ENCODE measurements at regions of chr1 and their contacts with region 1.

Region 1: DNA sequence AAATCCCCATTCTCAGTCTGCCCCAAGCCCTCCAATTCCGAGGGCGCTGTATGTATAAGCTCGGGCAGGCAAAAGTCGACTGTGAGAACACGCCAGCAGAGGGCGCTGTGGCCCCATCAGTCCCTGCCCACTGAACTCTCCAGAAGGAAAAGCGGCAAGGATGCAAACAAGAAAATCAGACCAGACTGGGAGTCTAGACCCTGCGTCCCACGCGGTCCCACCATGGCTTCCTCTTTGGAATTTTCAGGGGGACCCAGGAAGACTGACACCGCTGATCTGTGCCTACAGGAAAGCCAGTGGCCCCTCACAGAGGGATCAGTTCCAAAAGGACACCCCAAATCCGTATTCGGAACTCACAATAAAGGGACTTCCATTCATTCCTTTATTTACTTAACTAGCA is 19.5 kb downstream of the TEX35 start:
- DNase-seq: peak; percentile 68
- ATAC-seq: peak; percentile 64
- H3K4me3 ChIP-seq: 0 out of 4 replicates have a peak overlapping the region, but pooled peaks of 1 of the 2 experiments have one; percentile 13
- H3K27ac ChIP-seq: no peak overlapping the region
- H3K4me1 ChIP-seq: peaks cover 27 to 55% of the 10 kb centered on the region in 2 experiments
- H3K27me3 ChIP-seq: no peaks in the 10 kb centered on the region
- CTCF ChIP-seq: peak; percentile 91 to 96 (median 92)
- POLR2A ChIP-seq: no peak
- RAD21 ChIP-seq: peak; percentile 96

Region 2: GRCh38 chr1:178300352-178300699 is 232.1 kb before region 1 on chr1:
- CTCF ChIA-PET with region 1: interaction called, 15 read pairs
- POLR2A ChIA-PET with region 1: no interaction called
- RAD21 ChIA-PET with region 1: interaction called in 1 of 2 experiments, 4 read pairs
- intact Hi-C with region 1: no loop called
- DNase-seq: no peak
- ATAC-seq: peak; percentile 34; the same call in 1 of the 2 replicates
- H3K4me3 ChIP-seq: no peak overlapping the region
- H3K27ac ChIP-seq: no peak overlapping the region
- H3K4me1 ChIP-seq: peaks cover 4 to 8% of the 10 kb centered on the region in 2 experiments; a peak in 2 of 4 replicates
- H3K27me3 ChIP-seq: no peaks in the 10 kb centered on the region
- CTCF ChIP-seq: no peak
- POLR2A ChIP-seq: no peak
- RAD21 ChIP-seq: no peak

Region 3: GRCh38 chr1:178501705-178502329 is 30.6 kb before region 1 on chr1:
- CTCF ChIA-PET with region 1: interaction called, 10 read pairs
- POLR2A ChIA-PET with region 1: no interaction called
- RAD21 ChIA-PET with region 1: no interaction called
- intact Hi-C with region 1: no loop called
- DNase-seq: peak; percentile 48
- ATAC-seq: peak; percentile 91
- H3K4me3 ChIP-seq: no peak overlapping the region
- H3K27ac ChIP-seq: no peak overlapping the region
- H3K4me1 ChIP-seq: peaks cover 0 to 7% of the 10 kb centered on the region in 2 experiments; a peak in 1 of 4 replicates
- H3K27me3 ChIP-seq: no peaks in the 10 kb centered on the region
- CTCF ChIP-seq: peak; percentile 80 to 95 (median 85)
- POLR2A ChIP-seq: no peak
- RAD21 ChIP-seq: peak; percentile 80

Region 4: DNA sequence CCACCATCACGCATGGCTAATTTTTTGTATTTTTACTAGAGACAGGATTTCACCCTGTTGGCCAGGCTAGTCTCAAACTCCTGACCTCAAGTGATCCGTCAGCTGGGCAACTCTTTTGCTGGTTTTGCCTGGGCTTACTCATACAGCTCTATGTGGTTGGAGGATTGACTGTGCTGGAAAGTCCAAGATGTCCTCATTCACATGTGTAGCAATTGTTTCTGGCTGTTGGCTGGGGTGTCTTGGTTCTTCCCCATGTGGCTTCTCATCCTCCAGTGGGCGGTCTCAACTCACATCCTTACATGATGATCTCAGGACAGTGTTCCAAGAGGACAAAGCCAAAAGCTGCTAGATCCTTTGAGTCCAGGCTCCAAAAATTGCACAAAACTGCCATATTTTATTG is 33.8 kb after region 1 on chr1:
- CTCF ChIA-PET with region 1: no interaction called
- POLR2A ChIA-PET with region 1: no interaction called
- RAD21 ChIA-PET with region 1: no interaction called
- intact Hi-C with region 1: no loop called
- DNase-seq: no peak
- ATAC-seq: no peak
- H3K4me3 ChIP-seq: no peak overlapping the region
- H3K27ac ChIP-seq: no peak overlapping the region
- H3K4me1 ChIP-seq: no peaks in the 10 kb centered on the region
- H3K27me3 ChIP-seq: no peaks in the 10 kb centered on the region
- CTCF ChIP-seq: no peak
- POLR2A ChIP-seq: no peak
- RAD21 ChIP-seq: no peak

Region 5: GRCh38 chr1:178938959-178939317 is 406.5 kb after region 1 on chr1:
- CTCF ChIA-PET with region 1: no interaction called
- POLR2A ChIA-PET with region 1: no interaction called
- RAD21 ChIA-PET with region 1: no interaction called
- intact Hi-C with region 1: no loop called
- DNase-seq: no peak
- ATAC-seq: no peak
- H3K4me3 ChIP-seq: no peak overlapping the region
- H3K27ac ChIP-seq: no peak overlapping the region
- H3K4me1 ChIP-seq: no peaks in the 10 kb centered on the region
- H3K27me3 ChIP-seq: no peaks in the 10 kb centered on the region
- CTCF ChIP-seq: no peak
- POLR2A ChIP-seq: no peak
- RAD21 ChIP-seq: no peak

Region 6: GRCh38 chr1:179081687-179082332 is 549.4 kb after region 1 on chr1 and contains the start of gene TOR3A:
- CTCF ChIA-PET with region 1: no interaction called
- POLR2A ChIA-PET with region 1: no interaction called
- RAD21 ChIA-PET with region 1: interaction called in 1 of 2 experiments, 3 read pairs
- intact Hi-C with region 1: loop called (anchors 2 kb)
- DNase-seq: peak; percentile 68
- ATAC-seq: peak; percentile 92
- H3K4me3 ChIP-seq: peak within 1 kb of the TSS; percentile 73 to 82
- H3K27ac ChIP-seq: peak within 1 kb of the TSS; percentile 74
- H3K4me1 ChIP-seq: peaks cover 0 to 23% of the 10 kb centered on the region in 2 experiments; a peak in 3 of 4 replicates
- H3K27me3 ChIP-seq: no peaks in the 10 kb centered on the region
- CTCF ChIP-seq: no peak
- POLR2A ChIP-seq: no peak
- RAD21 ChIP-seq: no peak
- total RNA-seq, gene TOR3A: 27.0 TPM

Region 7: DNA sequence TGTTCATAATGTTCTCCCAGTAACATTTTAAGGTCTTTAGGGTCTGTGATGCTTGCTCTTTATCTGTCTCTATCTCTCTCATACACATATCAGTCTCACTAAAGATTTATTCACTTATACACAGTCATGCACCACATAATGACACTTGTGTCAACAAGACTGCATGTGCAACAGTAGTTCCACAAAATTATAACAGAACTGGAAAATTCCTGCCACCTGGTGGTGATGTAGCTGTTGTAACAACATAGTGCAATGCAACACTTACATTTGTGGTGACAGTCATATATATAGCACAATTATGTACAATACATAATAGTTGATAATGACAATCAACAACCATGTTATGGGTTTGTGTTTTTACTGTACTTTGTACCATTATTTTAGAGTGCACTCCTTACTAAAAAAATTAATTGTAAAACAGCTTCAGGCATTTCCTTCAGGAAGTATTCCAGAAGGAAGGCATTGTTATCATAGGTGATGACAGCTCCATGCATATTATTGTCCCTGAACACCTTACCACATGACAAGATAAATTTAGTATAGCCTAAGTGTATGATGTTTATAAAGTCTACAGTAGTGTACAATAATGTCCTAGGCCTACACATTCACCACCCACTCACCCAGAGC is 1067.3 kb after region 1 on chr1:
- CTCF ChIA-PET with region 1: no interaction called
- POLR2A ChIA-PET with region 1: no interaction called
- RAD21 ChIA-PET with region 1: no interaction called
- intact Hi-C with region 1: loop called (anchors 10 kb)
- DNase-seq: peak; percentile 44
- ATAC-seq: peak; percentile 95
- H3K4me3 ChIP-seq: no peak overlapping the region
- H3K27ac ChIP-seq: no peak overlapping the region
- H3K4me1 ChIP-seq: no peaks in the 10 kb centered on the region
- H3K27me3 ChIP-seq: no peaks in the 10 kb centered on the region
- CTCF ChIP-seq: peak; percentile 55 to 70 (median 56); a peak in 5 of 6 replicates
- POLR2A ChIP-seq: no peak
- RAD21 ChIP-seq: peak; percentile 72

Measured in HCT116 (cell line).